PC-9 (cell line): ENCODE measurements at regions of chr5 and their contacts with region 1.

Region 1: DNA sequence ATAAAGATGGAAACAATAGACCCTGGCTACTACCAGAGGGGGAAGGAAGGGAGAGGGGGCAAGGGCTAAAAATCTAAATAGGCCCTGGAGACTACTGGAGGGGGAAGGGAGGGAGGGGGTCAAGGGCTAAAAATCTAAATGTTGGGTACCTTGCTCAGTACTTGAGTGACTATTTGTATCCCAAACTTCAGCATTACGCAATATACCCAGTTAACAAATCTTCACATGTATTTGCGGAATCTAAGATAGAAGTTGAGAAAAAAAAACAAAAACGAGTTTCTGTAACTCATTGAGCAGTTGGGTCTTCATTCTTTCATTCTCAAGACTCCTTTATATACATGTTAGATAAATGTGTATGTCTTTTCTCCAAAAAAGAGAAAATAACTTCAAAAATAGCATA is 537.4 kb downstream of the TAF11L14 start:
- DNase-seq: no peak
- H3K4me3 ChIP-seq: no peak overlapping the region
- H3K27ac ChIP-seq: no peak overlapping the region
- H3K4me1 ChIP-seq: no peaks in the 10 kb centered on the region
- H3K27me3 ChIP-seq: no peaks in the 10 kb centered on the region
- CTCF ChIP-seq: no peak

Region 2: GRCh38 chr5:16315501-16315900 is 1856.2 kb before region 1 on chr5:
- CTCF ChIA-PET with region 1: no interaction called
- POLR2A ChIA-PET with region 1: interaction called, 10 read pairs
- intact Hi-C with region 1: no loop called
- DNase-seq: no peak
- H3K4me3 ChIP-seq: no peak overlapping the region
- H3K27ac ChIP-seq: no peak overlapping the region
- H3K4me1 ChIP-seq: no peaks in the 10 kb centered on the region
- H3K27me3 ChIP-seq: no peaks in the 10 kb centered on the region
- CTCF ChIP-seq: no peak